A673 (cell line): ENCODE measurements at regions of chr19 and their contacts with region 1.

Region 1: DNA sequence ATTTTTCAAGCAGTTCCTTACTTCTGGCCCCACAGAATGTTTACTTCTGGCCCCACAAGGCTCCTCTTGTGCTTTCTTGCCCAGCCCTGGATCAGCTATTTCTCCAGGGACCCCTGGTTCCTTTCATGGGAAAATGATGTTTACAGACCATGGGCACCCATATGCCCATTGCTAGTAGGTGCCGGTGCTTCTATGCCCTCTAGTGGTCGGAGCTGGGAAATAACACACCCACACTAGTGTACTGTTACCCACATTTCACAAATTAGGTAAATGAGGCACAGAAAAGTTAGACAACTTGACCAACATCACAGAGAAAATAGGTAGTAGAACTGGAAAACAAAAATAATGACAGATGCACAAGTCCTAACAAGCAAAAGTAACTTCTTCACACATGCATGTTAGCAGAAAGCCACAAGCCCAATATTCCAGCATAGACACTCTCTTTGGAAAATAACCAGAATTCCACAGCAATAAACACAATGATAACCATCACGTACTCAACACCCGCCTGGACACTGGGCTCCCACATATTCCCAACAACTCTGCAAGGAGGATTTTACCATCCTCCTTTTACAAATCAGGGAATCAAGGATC is 1.3 kb upstream of the CEACAM6 start:
- DNase-seq: peak; percentile 85
- H3K4me3 ChIP-seq: no peak overlapping the region
- H3K27ac ChIP-seq: peak overlapping the region; percentile 68
- H3K4me1 ChIP-seq: peaks cover 19% of the 10 kb centered on the region
- H3K27me3 ChIP-seq: no peaks in the 10 kb centered on the region
- CTCF ChIP-seq: peak; percentile 87

Region 2: DNA sequence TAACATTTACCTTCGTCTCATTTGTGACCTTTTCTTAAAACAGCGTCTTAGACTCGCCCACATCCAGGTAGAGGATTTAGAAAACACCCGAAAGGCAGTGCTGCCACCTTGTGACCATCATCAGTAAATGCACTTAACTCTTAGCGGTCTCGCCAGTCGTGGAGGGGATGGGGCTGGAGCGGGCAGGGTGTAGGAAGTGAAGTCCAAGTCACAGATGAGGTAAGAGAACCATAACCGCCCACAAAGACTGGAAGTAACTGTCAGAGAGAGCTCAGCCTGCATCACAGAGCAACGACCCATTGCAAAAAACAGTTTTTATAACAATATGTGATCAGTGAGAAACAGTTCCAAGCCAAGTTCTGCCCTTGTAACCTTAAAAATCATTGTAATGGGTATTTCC is 31.6 kb after region 1 on chr19:
- CTCF ChIA-PET with region 1: interaction called, 11 read pairs
- POLR2A ChIA-PET with region 1: no interaction called
- intact Hi-C with region 1: loop called (anchors 2 kb)
- DNase-seq: peak; percentile 88
- H3K4me3 ChIP-seq: no peak overlapping the region
- H3K27ac ChIP-seq: no peak overlapping the region
- H3K4me1 ChIP-seq: peaks cover 11% of the 10 kb centered on the region
- H3K27me3 ChIP-seq: no peaks in the 10 kb centered on the region
- CTCF ChIP-seq: peak; percentile 92

Region 3: GRCh38 chr19:41821003-41821735 is 67.1 kb after region 1 on chr19:
- CTCF ChIA-PET with region 1: interaction called, 6 read pairs
- POLR2A ChIA-PET with region 1: no interaction called
- intact Hi-C with region 1: loop called (anchors 1 kb)
- DNase-seq: peak; percentile 73
- H3K4me3 ChIP-seq: no peak overlapping the region
- H3K27ac ChIP-seq: no peak overlapping the region
- H3K4me1 ChIP-seq: no peaks in the 10 kb centered on the region
- H3K27me3 ChIP-seq: no peaks in the 10 kb centered on the region
- CTCF ChIP-seq: peak; percentile 84